PC-3 (cell line): ENCODE measurements at regions of chr7 and their contacts with region 1.

Region 1: DNA sequence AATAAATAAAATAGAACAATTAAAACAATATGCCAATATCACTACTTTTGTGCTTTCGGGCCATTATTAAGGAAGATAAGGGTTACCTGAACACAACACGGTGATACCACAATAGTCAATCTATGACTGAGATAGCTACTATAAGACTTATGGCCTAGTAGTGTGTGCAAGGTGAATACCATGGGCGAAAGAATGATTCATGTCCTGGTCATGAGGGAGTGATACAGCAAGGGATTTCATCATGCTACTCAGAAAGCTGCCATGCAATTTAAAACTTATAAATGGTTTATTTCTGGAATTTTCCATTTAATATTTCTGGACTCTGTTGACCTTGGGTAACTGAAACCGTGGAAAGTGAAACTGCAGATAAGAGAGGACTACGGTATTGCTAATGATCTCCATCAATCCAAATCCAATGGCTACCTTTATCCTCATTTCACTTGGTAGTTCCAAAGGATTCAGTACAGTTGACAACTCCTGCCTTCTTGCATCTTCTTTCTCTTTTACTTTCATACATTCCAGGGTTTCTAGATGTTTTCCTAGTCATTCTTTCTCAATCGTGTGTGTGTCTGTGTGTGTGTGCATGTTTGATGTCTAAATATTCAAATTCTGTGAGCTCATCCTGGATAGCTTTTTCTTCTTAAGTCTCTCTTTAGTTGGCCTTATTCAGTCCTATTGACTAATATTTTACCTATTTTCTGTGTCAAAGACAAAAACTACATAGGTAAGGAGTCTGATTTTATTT is 100.5 kb upstream of the MAGI2 start:
- DNase-seq: peak; percentile 81
- ATAC-seq: peak; percentile 98
- H3K4me3 ChIP-seq: no peak overlapping the region
- H3K27ac ChIP-seq: peak overlapping the region; percentile 86
- H3K4me1 ChIP-seq: peaks cover 14% of the 10 kb centered on the region
- H3K27me3 ChIP-seq: no peaks in the 10 kb centered on the region
- CTCF ChIP-seq: no peak

Region 2: GRCh38 chr7:79604841-79605240 is 50.9 kb after region 1 on chr7:
- CTCF ChIA-PET with region 1: no interaction called
- POLR2A ChIA-PET with region 1: no interaction called
- intact Hi-C with region 1: loop called (anchors 5 kb)
- DNase-seq: no peak
- ATAC-seq: no peak
- H3K4me3 ChIP-seq: no peak overlapping the region
- H3K27ac ChIP-seq: no peak overlapping the region
- H3K4me1 ChIP-seq: no peaks in the 10 kb centered on the region
- H3K27me3 ChIP-seq: no peaks in the 10 kb centered on the region
- CTCF ChIP-seq: no peak